HEK293 (cell line): ENCODE measurements at regions of chr22 and their contacts with region 1.

Region 1: GRCh38 chr22:36775964-36776669 is at the start of gene IFT27:
- H3K4me3 ChIP-seq: peak within 1 kb of the TSS; percentile 90
- H3K27ac ChIP-seq: no peak within 1 kb of the TSS; the same call in 1 of the 2 replicates
- H3K4me1 ChIP-seq: peaks cover 4% of the 10 kb centered on the region
- CTCF ChIP-seq: no peak

Region 2: DNA sequence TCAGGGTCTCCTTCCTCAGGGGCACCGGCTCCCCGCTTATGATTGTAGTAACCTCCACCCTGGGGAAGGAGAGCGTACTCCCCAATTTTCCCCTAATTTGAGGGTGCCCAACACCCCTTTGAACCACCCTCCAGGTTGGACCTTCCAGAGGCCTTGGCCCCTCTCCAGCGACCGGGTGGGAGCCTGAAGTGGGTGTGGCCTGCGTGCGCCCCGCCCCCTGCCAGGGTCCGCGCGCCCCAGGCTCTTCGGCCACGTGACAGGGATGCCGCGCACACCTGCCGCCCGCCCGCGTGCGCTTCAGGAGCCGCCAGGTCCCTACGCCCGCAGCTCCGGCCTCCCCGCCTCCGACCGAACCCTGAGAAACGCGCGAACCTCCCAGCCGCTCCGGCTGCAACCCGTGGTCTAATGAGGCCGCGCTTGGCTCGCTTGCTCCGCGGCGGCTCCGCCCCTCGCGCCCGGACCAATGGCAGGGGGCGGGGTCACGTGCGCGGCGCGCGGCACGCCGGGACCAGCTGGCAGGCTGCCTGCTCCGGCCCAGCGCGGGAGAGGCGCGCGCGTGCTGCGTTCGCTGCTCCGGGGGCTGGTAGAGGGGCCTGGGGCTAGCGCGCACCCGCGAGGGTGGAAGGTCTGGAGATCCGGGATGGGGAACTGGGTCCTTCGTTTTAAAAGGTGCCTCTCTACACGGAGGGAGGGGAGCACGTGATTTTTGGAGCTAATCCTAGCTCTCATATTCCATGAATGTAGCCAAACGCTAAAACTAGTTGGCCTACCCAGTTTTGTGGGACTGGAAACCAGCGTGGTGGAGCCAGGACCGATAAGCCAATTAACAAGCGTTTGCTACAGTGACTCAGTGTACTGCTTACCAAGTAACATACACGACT is 269.2 kb before region 1 on chr22 and contains the start of gene FOXRED2:
- CTCF ChIA-PET with region 1: interaction called, 19 read pairs
- POLR2A ChIA-PET with region 1: interaction called, 5 read pairs
- H3K4me3 ChIP-seq: peak within 1 kb of the TSS; percentile 58
- H3K27ac ChIP-seq: peak within 1 kb of the TSS; percentile 85
- H3K4me1 ChIP-seq: peaks cover 3% of the 10 kb centered on the region; the same call in 1 of the 2 replicates
- CTCF ChIP-seq: no peak

Region 3: GRCh38 chr22:36528795-36529751 is 247.0 kb before region 1 on chr22 and contains the start of gene EIF3D:
- CTCF ChIA-PET with region 1: no interaction called
- POLR2A ChIA-PET with region 1: interaction called, 14 read pairs
- H3K4me3 ChIP-seq: peak within 1 kb of the TSS; percentile 94
- H3K27ac ChIP-seq: peak within 1 kb of the TSS; percentile 98
- H3K4me1 ChIP-seq: 0 out of 2 replicates have a peak, but pooled peaks cover 5% of the 10 kb centered on the region
- CTCF ChIP-seq: peak; percentile 18; the same call in 1 of the 2 replicates

Region 4: DNA sequence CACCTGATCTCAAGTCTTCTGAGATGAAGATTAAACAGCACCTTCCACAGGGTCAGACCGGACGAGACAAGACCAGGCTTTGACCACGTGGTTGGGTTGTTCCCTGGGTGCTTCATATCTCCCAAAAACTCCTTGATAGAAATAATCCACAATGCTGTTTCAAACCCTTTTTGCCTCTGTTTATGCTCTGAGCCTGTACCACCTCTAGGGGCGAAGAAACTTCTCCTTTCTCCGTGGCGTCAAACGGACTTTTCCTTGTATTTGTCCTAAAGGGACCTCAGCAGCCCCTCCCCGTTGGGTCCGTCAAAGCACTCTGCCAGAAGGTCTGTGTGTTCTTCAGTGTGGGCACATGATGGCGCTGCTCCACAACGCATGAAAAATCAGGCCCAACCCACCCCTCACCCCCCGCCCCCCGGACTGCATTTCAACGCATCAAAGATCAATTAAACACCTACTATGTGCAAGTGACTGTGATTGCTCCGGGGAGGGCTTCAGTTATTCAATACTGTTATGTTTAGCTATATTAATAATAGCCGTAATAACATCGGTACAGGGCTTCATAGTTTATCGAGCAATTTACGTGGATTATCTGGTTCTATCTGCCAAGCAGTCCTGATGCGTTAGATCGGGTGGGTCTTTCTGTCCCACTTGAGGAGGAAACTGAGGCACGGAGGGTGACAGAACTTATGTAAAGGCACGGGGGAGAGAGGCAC is 229.9 kb before region 1 on chr22:
- CTCF ChIA-PET with region 1: interaction called, 31 read pairs
- POLR2A ChIA-PET with region 1: interaction called, 3 read pairs
- H3K4me3 ChIP-seq: no peak overlapping the region
- H3K27ac ChIP-seq: no peak overlapping the region
- H3K4me1 ChIP-seq: no peaks in the 10 kb centered on the region
- CTCF ChIP-seq: peak; percentile 57

Region 5: GRCh38 chr22:36673821-36674220 is 102.3 kb before region 1 on chr22:
- CTCF ChIA-PET with region 1: no interaction called
- POLR2A ChIA-PET with region 1: no interaction called
- H3K4me3 ChIP-seq: no peak overlapping the region
- H3K27ac ChIP-seq: no peak overlapping the region
- H3K4me1 ChIP-seq: no peaks in the 10 kb centered on the region
- CTCF ChIP-seq: no peak

Region 6: DNA sequence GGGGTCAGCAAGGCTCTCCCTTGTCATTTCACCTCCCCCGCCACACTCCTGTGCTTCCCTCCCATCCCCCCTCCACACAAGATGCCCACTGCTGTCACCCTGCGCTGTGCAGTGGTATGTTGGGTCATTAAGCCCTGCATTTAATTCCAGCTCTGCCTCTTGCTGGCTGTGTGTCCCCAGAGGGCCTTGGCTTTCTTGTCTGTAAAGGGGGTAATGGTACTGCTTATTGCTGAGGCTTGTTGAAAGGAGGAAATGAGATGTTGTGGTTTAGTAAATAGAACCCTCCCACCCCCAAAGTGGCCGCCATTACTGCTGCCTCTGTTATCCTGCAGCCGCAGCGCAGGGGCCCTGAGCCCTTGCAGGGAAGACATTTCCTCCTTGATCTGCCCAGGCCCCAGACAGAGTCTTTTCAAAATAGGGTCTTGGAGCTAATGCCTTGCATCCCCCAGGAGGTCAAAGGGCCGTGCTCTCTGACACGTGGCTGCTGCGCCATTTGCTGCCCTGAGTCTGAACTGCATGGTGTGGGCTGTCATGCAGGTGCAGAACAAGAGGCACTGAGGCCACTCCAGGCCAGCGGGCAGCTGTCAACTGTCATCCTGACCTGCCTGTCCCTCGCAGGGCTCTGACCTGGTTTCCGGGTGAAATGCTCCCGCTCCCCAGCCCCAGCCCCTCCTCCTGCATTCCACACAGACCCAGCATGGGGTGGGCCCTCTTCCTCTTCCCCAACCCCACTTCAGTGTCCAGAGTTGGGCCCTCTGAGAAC is 22.0 kb after region 1 on chr22:
- CTCF ChIA-PET with region 1: no interaction called
- POLR2A ChIA-PET with region 1: no interaction called
- H3K4me3 ChIP-seq: no peak overlapping the region
- H3K27ac ChIP-seq: no peak overlapping the region
- H3K4me1 ChIP-seq: no peaks in the 10 kb centered on the region; the same call in 1 of the 2 replicates
- CTCF ChIP-seq: no peak

Region 7: DNA sequence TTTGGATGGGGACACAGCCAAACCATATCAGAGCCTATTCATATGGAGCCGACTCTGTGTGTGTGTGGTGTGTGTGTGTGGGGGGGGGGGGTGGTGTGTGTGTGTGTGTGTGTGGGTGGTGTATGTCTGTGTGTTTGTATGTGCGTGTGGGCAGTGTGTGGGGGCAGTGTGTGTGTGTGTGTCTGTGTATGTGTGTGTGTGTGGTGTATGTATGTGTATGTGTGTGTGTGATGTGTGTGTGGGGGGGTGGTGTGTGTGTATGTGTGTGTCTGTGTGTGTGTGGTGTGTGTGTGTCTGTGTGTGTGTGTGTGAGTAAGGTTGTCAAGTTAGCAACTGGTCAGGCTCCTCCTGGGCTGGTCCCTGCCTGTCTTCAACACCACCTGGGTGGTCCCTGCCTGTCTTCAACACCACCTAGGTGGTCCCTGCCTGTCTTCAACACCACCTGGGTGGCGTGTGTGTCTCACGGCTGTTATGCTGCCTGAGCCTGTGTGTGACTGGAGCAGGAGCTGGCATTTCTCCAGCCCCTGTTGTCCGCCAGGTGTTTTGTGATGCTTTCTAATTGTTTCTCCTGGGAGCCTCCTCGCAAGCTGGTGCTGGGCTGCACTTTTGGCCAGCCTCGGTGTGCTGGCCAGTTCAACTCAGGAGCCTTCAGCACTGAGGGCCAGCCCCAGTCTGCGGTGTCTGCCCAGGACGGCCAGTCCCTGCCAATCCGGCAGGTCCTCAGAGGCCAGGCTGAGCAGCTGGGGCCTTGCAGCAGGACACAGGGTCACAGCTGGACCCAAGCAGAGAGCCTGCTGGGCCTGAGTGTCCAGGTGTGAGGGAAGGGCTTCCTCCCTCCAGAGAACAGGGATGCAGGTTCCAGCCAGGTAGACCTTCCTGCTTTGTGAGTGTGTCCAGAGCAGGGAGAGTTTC is 62.3 kb after region 1 on chr22:
- CTCF ChIA-PET with region 1: no interaction called
- POLR2A ChIA-PET with region 1: no interaction called
- H3K4me3 ChIP-seq: no peak overlapping the region
- H3K27ac ChIP-seq: no peak overlapping the region
- H3K4me1 ChIP-seq: no peaks in the 10 kb centered on the region
- CTCF ChIP-seq: no peak